Left colon (tissue), 2 donors: ENCODE measurements at regions of chr1 and their contacts with region 1.

Region 1: GRCh38 chr1:197915862-197916499 is 1.2 kb upstream of the LHX9 start:
- DNase-seq: peak in 1 of 2 donors; percentile 70
- ATAC-seq: peak; percentile 77

Region 2: GRCh38 chr1:197783510-197783948 is 132.5 kb before region 1 on chr1:
- intact Hi-C with region 1: loop called in 1 of 2 experiments (anchors 5 kb)
- DNase-seq: no peak
- ATAC-seq: peak; percentile 90

Region 3: GRCh38 chr1:198212637-198213036 is 296.7 kb after region 1 on chr1:
- intact Hi-C with region 1: no loop called
- DNase-seq: no peak
- ATAC-seq: no peak